H1 (cell line): ENCODE measurements at regions of chr11 and their contacts with region 1.

Region 1: GRCh38 chr11:9573052-9573774 is at the start of gene WEE1:
- DNase-seq: peak; percentile 97 to 99
- H3K4me3 ChIP-seq: peak within 1 kb of the TSS; percentile 80 to 93 (median 84)
- H3K27ac ChIP-seq: peak within 1 kb of the TSS; percentile 92
- H3K4me1 ChIP-seq: peaks cover 5 to 14% (median 11%) of the 10 kb centered on the region in 4 experiments
- H3K27me3 ChIP-seq: no peaks in the 10 kb centered on the region
- CTCF ChIP-seq: no peak
- EP300 ChIP-seq: 0 out of 3 replicates have a peak, but pooled peaks of 1 of the 2 experiments have one; percentile 8
- POLR2A ChIP-seq: peak; percentile 74 to 86
- RAD21 ChIP-seq: no peak
- total RNA-seq, gene WEE1: 115 and 120 TPM in 2 replicates

Region 2: GRCh38 chr11:9506489-9507276 is 66.5 kb before region 1 on chr11:
- CTCF ChIA-PET with region 1: interaction called, 11 read pairs
- POLR2A ChIA-PET with region 1: interaction called, 10 read pairs
- DNase-seq: peak; percentile 79 to 86
- H3K4me3 ChIP-seq: peak overlapping the region in 1 of 4 experiments; percentile 37; a peak in 2 of 8 replicates
- H3K27ac ChIP-seq: no peak overlapping the region; the same call in 1 of the 2 replicates
- H3K4me1 ChIP-seq: peaks cover 0 to 6% (median 3%) of the 10 kb centered on the region in 4 experiments; a peak in 5 of 7 replicates
- H3K27me3 ChIP-seq: no peaks in the 10 kb centered on the region
- CTCF ChIP-seq: peak; percentile 24 to 94 (median 82)
- EP300 ChIP-seq: no peak
- POLR2A ChIP-seq: no peak
- RAD21 ChIP-seq: peak; percentile 92 to 93

Region 3: DNA sequence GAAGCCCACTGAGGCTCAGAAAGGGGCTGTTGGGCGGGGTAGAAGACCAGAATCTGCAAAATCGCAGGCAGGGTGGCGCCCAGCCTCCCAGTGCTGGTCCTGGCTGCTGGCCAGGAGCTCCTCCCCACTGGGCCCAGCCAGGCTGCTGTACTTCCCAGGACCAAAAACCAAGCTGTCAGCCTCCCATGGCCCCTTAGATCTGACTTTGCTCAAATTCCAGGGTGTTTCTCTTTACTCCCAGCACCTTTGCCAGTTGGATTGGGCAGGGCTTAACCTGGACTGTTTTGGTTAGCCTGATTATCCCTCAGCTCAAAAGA is 43.9 kb before region 1 on chr11:
- CTCF ChIA-PET with region 1: interaction called, 23 read pairs
- POLR2A ChIA-PET with region 1: interaction called, 13 read pairs
- DNase-seq: no peak
- H3K4me3 ChIP-seq: no peak overlapping the region
- H3K27ac ChIP-seq: no peak overlapping the region
- H3K4me1 ChIP-seq: peaks cover 2 to 9% (median 4%) of the 10 kb centered on the region in 4 experiments; a peak in 5 of 7 replicates
- H3K27me3 ChIP-seq: no peaks in the 10 kb centered on the region
- CTCF ChIP-seq: no peak
- EP300 ChIP-seq: no peak
- POLR2A ChIP-seq: no peak
- RAD21 ChIP-seq: no peak

Region 4: GRCh38 chr11:9534791-9535781 is 38.1 kb before region 1 on chr11:
- CTCF ChIA-PET with region 1: interaction called, 23 read pairs
- POLR2A ChIA-PET with region 1: interaction called, 13 read pairs
- DNase-seq: peak; percentile 64 to 97
- H3K4me3 ChIP-seq: no peak overlapping the region
- H3K27ac ChIP-seq: no peak overlapping the region
- H3K4me1 ChIP-seq: peaks cover 0 to 13% (median 5%) of the 10 kb centered on the region in 4 experiments; a peak in 5 of 7 replicates
- H3K27me3 ChIP-seq: no peaks in the 10 kb centered on the region
- CTCF ChIP-seq: peak; percentile 81 to 94 (median 94)
- EP300 ChIP-seq: no peak
- POLR2A ChIP-seq: no peak
- RAD21 ChIP-seq: peak; percentile 71 to 73

Region 5: GRCh38 chr11:9594267-9595046 is 21.2 kb after region 1 on chr11:
- CTCF ChIA-PET with region 1: interaction called, 5 read pairs
- POLR2A ChIA-PET with region 1: interaction called, 48 read pairs
- DNase-seq: peak in 1 of 2 experiments; percentile 49
- H3K4me3 ChIP-seq: no peak overlapping the region
- H3K27ac ChIP-seq: no peak overlapping the region
- H3K4me1 ChIP-seq: no peaks in the 10 kb centered on the region; a peak in 4 of 7 replicates
- H3K27me3 ChIP-seq: peaks cover 0 to 1% (median 0%) of the 10 kb centered on the region in 4 experiments; a peak in 1 of 7 replicates
- CTCF ChIP-seq: no peak
- EP300 ChIP-seq: no peak
- POLR2A ChIP-seq: no peak
- RAD21 ChIP-seq: no peak

Region 6: DNA sequence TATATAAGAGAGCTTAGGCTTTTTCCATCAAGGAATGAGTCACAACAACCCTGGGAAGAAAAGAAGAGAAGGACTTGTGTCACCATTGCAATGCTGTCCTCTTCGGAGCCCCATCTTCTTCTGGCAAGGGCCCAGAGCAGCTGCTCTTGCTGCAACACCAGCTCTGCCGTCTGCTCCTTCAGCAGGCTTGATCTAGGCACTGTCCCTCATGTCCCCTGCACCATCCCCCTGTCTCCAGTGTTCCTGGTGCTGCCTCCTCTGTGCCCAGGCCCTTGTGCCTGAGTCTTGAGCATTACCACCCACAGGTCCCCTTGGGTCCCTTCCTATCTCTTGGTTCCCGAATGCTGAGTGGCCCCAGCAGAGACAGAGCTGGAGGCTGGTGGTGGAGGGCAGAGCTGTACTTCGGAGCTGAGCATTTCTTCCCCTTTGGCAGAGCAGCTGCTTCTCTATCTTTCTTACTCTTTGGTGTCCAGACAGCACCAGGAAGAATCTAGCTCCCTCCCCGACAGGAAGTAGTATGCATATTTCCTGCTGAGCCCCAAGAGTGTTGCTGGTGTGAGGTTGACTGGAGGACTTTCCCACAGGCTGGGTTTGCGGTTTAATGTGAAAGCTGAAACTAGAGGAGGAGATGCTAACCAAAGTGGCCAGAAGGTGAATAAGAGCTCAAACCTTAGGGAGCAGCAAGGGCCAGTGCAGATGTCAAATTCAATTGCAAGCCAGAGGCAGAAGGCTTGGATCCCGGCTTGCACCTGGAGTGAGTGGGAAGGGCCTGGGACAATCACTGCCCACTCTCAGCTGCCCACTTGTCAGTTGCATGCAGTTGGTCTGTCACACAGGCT is 28.0 kb after region 1 on chr11:
- CTCF ChIA-PET with region 1: interaction called, 5 read pairs
- POLR2A ChIA-PET with region 1: interaction called, 15 read pairs
- DNase-seq: peak in 1 of 2 experiments; percentile 52
- H3K4me3 ChIP-seq: no peak overlapping the region
- H3K27ac ChIP-seq: no peak overlapping the region; the same call in 1 of the 2 replicates
- H3K4me1 ChIP-seq: peaks cover 3 to 10% (median 6%) of the 10 kb centered on the region in 4 experiments; a peak in 6 of 7 replicates
- H3K27me3 ChIP-seq: no peaks in the 10 kb centered on the region; a peak in 1 of 7 replicates
- CTCF ChIP-seq: no peak
- EP300 ChIP-seq: no peak
- POLR2A ChIP-seq: no peak
- RAD21 ChIP-seq: no peak

Region 7: DNA sequence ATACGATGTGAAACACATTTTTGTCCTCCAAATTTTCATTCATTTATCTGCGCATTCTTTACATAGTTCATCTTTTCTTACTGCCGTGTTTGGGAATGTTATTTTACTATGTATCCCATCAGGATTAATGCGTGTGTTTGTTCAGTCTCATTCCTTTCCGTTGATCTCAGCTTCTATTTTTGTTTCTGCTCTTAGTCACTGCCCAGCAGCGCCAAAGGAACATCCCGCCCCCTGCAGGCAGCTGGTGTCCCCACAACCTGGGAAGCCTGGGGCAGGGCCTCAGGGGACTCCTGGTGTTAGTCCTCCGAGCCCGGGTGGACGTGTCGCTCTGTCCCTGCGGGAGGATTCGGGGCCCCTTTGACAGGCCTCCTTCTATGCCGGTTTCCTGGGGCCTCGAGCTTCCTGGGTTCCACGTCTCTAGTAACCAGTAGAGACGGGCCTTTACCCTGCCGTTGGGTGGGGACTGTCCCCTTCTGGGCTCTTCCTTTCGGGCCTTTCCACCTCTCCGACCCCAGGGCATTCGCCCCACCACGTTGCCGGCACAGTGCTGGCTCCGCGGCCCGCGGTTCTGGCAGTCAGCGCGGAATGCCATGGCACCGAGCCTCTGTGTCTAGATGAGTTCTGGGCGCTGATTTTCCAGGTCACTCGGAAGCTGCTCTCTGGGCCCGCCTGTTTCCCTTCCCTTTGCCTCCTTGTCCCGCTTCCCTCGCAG is 40.1 kb after region 1 on chr11:
- CTCF ChIA-PET with region 1: interaction called, 5 read pairs
- POLR2A ChIA-PET with region 1: interaction called, 15 read pairs
- DNase-seq: peak; percentile 83 to 96
- H3K4me3 ChIP-seq: peak overlapping the region; percentile 26 to 55 (median 42)
- H3K27ac ChIP-seq: peak overlapping the region; percentile 57; the same call in 1 of the 2 replicates
- H3K4me1 ChIP-seq: peaks cover 0 to 7% (median 2%) of the 10 kb centered on the region in 4 experiments; a peak in 4 of 7 replicates
- H3K27me3 ChIP-seq: peaks cover 0 to 2% (median 0%) of the 10 kb centered on the region in 4 experiments; a peak in 3 of 7 replicates
- CTCF ChIP-seq: peak; percentile 85 to 90 (median 89)
- EP300 ChIP-seq: peak in 1 of 2 experiments; percentile 76; a peak in 1 of 3 replicates
- POLR2A ChIP-seq: peak in 1 of 2 experiments; percentile 63; a peak in 1 of 3 replicates
- RAD21 ChIP-seq: peak; percentile 78 to 81

Region 8: GRCh38 chr11:9765320-9766020 is 192.3 kb after region 1 on chr11:
- CTCF ChIA-PET with region 1: no interaction called
- POLR2A ChIA-PET with region 1: no interaction called
- DNase-seq: peak in 1 of 2 experiments; percentile 55
- H3K4me3 ChIP-seq: no peak overlapping the region
- H3K27ac ChIP-seq: no peak overlapping the region
- H3K4me1 ChIP-seq: peaks cover 0 to 12% (median 5%) of the 10 kb centered on the region in 4 experiments; a peak in 5 of 7 replicates
- H3K27me3 ChIP-seq: no peaks in the 10 kb centered on the region
- CTCF ChIP-seq: no peak
- EP300 ChIP-seq: no peak
- POLR2A ChIP-seq: no peak
- RAD21 ChIP-seq: no peak